ENCODE measurements at regions of chr2 and their contacts with region 1.

Region 1: GRCh38 chr2:172172513-172173173 is 69.9 kb upstream of the DLX2 start:
- DNase-seq: peak; percentile 91
- H3K4me3 ChIP-seq: peak overlapping the region; percentile 61 to 67
- H3K27ac ChIP-seq: no peak overlapping the region
- H3K4me1 ChIP-seq: peaks cover 0 to 3% of the 10 kb centered on the region in 2 experiments; a peak in 1 of 4 replicates
- H3K27me3 ChIP-seq: no peaks in the 10 kb centered on the region
- CTCF ChIP-seq: peak; percentile 81
- EP300 ChIP-seq: no peak
- RAD21 ChIP-seq: peak; percentile 88

Region 2: DNA sequence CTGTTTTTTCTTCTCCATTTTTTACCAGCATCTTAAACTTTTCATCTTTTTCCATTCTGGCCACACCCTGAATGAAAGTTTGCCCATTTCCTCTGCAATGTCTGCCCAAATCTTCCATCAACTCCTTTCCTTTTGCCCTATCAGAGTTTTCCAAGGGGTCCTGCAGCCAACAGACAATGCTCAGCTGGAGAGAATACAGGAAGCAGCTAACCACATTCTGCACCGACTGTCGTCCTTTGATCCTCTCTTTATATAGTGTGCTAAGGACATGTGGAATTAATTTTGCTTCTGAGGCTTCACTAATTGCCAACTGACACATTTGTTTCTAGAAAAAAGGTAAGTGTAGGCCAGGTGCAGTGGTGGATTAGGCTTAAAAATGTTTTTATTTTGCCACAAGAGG is 19.5 kb before region 1 on chr2:
- CTCF ChIA-PET with region 1: interaction called, 13 read pairs
- POLR2A ChIA-PET with region 1: no interaction called
- DNase-seq: no peak
- H3K4me3 ChIP-seq: no peak overlapping the region
- H3K27ac ChIP-seq: no peak overlapping the region
- H3K4me1 ChIP-seq: no peaks in the 10 kb centered on the region
- H3K27me3 ChIP-seq: 0 out of 2 replicates have a peak, but pooled peaks cover 6% of the 10 kb centered on the region
- CTCF ChIP-seq: no peak
- EP300 ChIP-seq: no peak
- RAD21 ChIP-seq: no peak

Region 3: DNA sequence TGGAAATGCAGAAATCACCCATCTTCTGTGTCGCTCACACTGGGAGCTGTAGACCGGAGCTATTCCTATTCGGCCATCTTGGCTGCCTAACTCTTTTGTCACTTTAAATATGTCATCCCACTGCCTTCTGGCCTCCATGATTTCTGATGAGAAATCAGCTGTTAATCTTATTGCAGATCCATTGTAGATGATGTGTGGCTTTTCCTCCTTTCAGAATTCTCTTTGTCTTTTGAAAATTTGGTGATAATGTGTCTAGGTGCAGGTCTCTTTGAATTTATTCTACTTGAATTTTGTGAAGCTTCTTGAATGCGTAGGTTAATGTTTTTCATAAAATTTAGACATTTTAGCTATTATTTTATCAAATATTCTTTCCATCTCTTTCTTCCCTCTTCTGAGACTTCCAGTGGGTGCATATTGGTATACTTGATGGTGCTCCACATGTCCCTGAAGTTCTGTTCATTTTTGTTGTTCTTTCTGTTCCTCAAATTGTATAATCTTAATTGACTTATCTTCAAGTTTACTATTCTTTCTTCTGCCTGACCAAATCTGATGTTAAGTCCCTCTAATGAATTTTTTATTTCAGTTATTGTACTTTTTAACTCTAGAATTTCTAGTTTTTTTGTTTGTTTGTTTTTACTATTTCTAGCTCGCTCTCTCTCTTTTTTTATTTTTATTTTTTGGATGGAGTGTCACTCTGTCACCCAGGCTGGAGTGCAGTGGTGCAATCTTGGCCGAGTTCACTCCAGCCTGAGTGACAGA is 20.9 kb after region 1 on chr2:
- CTCF ChIA-PET with region 1: no interaction called
- POLR2A ChIA-PET with region 1: no interaction called
- DNase-seq: no peak
- H3K4me3 ChIP-seq: no peak overlapping the region
- H3K27ac ChIP-seq: no peak overlapping the region
- H3K4me1 ChIP-seq: no peaks in the 10 kb centered on the region
- H3K27me3 ChIP-seq: no peaks in the 10 kb centered on the region
- CTCF ChIP-seq: no peak
- EP300 ChIP-seq: no peak
- RAD21 ChIP-seq: no peak

Region 4: GRCh38 chr2:172449911-172450550 is 277.4 kb after region 1 on chr2:
- CTCF ChIA-PET with region 1: interaction called, 16 read pairs
- POLR2A ChIA-PET with region 1: no interaction called
- DNase-seq: no peak
- H3K4me3 ChIP-seq: no peak overlapping the region; a peak in 1 of 4 replicates
- H3K27ac ChIP-seq: no peak overlapping the region
- H3K4me1 ChIP-seq: peaks cover 3 to 19% of the 10 kb centered on the region in 2 experiments; a peak in 3 of 4 replicates
- H3K27me3 ChIP-seq: no peaks in the 10 kb centered on the region
- CTCF ChIP-seq: no peak
- EP300 ChIP-seq: no peak
- RAD21 ChIP-seq: no peak

Region 5: GRCh38 chr2:172484253-172484652 is 311.6 kb after region 1 on chr2:
- CTCF ChIA-PET with region 1: interaction called, 27 read pairs
- POLR2A ChIA-PET with region 1: no interaction called
- DNase-seq: peak; percentile 36
- H3K4me3 ChIP-seq: no peak overlapping the region
- H3K27ac ChIP-seq: no peak overlapping the region
- H3K4me1 ChIP-seq: peaks cover 0 to 6% of the 10 kb centered on the region in 2 experiments; a peak in 1 of 4 replicates
- H3K27me3 ChIP-seq: no peaks in the 10 kb centered on the region
- CTCF ChIP-seq: peak; percentile 55
- EP300 ChIP-seq: no peak
- RAD21 ChIP-seq: peak; percentile 72

Region 6: DNA sequence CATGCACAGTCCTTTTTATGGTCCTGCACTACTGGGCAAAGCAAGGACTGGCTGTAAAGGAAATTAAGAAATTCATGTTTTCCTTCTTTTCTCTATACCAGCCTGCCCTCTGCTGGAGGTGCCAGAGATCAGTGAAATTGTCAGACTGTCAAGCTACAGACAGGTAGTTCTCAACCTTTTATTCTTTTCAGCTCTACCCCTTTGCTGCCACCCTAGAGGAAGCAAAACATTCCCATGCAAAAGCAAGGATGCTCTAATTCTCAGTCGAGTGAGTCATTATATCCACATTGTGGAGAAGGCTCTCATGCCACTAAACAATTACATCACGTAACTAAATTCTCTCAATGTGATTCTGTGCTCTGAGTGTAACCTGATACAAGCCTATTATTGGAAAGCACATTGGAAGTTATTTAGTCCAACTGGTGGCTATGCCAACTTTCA is 538.0 kb after region 1 on chr2:
- CTCF ChIA-PET with region 1: interaction called, 12 read pairs
- POLR2A ChIA-PET with region 1: no interaction called
- DNase-seq: peak; percentile 67
- H3K4me3 ChIP-seq: peak overlapping the region in 1 of 2 experiments; percentile 31; a peak in 1 of 4 replicates
- H3K27ac ChIP-seq: peak overlapping the region in 1 of 2 experiments; percentile 55; a peak in 1 of 4 replicates
- H3K4me1 ChIP-seq: peaks cover 0 to 4% of the 10 kb centered on the region in 2 experiments; a peak in 2 of 4 replicates
- H3K27me3 ChIP-seq: no peaks in the 10 kb centered on the region
- CTCF ChIP-seq: peak; percentile 84
- EP300 ChIP-seq: no peak
- RAD21 ChIP-seq: peak; percentile 88